ENCODE measurements at regions of chr12 and their contacts with region 1.

Region 1: GRCh38 chr12:29581631-29582030 is 84.1 kb upstream of the OVCH1 start:
- DNase-seq: peak; percentile 85
- H3K4me3 ChIP-seq: no peak overlapping the region
- H3K27me3 ChIP-seq: no peaks in the 10 kb centered on the region
- CTCF ChIP-seq: no peak

Region 2: GRCh38 chr12:29698756-29699155 is 117.1 kb after region 1 on chr12:
- CTCF ChIA-PET with region 1: no interaction called
- POLR2A ChIA-PET with region 1: interaction called, 10 read pairs
- DNase-seq: no peak
- H3K4me3 ChIP-seq: no peak overlapping the region
- H3K27me3 ChIP-seq: no peaks in the 10 kb centered on the region
- CTCF ChIP-seq: no peak

Region 3: DNA sequence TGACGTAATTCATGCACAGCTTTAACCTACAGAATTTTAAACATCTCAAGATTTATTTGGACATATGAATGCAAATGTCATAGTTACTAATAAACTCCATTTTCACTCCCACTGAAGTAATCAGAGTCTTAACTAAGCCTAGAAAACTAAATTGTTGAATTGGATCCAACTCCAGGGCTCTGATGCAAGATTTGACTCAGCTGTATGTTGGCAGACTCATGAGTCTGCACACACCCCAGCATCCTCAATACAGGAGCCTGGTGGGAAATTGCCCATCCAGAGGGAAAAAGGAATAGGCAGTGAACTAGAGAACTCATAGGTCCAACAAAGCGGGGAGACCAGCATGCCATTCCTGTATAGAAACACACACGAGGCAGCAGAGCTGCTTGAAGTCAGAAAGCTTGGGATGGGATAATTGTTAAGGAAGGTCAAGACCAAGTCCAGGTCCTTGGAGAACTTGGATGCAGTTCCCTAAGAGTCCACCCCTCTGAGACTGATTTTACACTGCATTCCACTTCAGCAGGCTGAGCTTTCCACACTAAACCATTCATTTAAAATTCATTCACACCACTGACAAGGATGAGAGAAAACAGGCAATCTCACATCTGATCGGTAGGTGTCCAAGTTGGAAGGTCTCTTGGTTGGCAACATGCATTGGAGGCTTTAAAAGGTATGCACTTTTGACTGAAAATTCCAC is 187.7 kb after region 1 on chr12:
- CTCF ChIA-PET with region 1: no interaction called
- POLR2A ChIA-PET with region 1: no interaction called
- DNase-seq: peak; percentile 44
- H3K4me3 ChIP-seq: no peak overlapping the region
- H3K27me3 ChIP-seq: no peaks in the 10 kb centered on the region
- CTCF ChIP-seq: no peak